PC-9 (cell line): ENCODE measurements at regions of chr17 and their contacts with region 1.

Region 1: GRCh38 chr17:77054936-77055335 is 85.8 kb upstream of the SEC14L1 start:
- DNase-seq: peak in 1 of 2 experiments; percentile 7
- H3K4me3 ChIP-seq: no peak overlapping the region
- H3K27ac ChIP-seq: no peak overlapping the region
- H3K4me1 ChIP-seq: no peaks in the 10 kb centered on the region
- H3K27me3 ChIP-seq: peaks cover 8% of the 10 kb centered on the region; the same call in 1 of the 2 replicates
- CTCF ChIP-seq: no peak

Region 2: GRCh38 chr17:76232342-76232741 is 822.6 kb before region 1 on chr17:
- CTCF ChIA-PET with region 1: no interaction called
- POLR2A ChIA-PET with region 1: interaction called, 25 read pairs
- intact Hi-C with region 1: no loop called
- DNase-seq: no peak
- H3K4me3 ChIP-seq: no peak overlapping the region
- H3K27ac ChIP-seq: no peak overlapping the region
- H3K4me1 ChIP-seq: no peaks in the 10 kb centered on the region
- H3K27me3 ChIP-seq: no peaks in the 10 kb centered on the region
- CTCF ChIP-seq: no peak

Region 3: GRCh38 chr17:76797241-76797840 is 257.6 kb before region 1 on chr17:
- CTCF ChIA-PET with region 1: no interaction called
- POLR2A ChIA-PET with region 1: no interaction called
- intact Hi-C with region 1: loop called (anchors 5 kb)
- DNase-seq: peak; percentile 40 to 57
- H3K4me3 ChIP-seq: no peak overlapping the region
- H3K27ac ChIP-seq: peak overlapping the region; percentile 16; the same call in 1 of the 2 replicates
- H3K4me1 ChIP-seq: peaks cover 13% of the 10 kb centered on the region
- H3K27me3 ChIP-seq: no peaks in the 10 kb centered on the region
- CTCF ChIP-seq: no peak

Region 4: DNA sequence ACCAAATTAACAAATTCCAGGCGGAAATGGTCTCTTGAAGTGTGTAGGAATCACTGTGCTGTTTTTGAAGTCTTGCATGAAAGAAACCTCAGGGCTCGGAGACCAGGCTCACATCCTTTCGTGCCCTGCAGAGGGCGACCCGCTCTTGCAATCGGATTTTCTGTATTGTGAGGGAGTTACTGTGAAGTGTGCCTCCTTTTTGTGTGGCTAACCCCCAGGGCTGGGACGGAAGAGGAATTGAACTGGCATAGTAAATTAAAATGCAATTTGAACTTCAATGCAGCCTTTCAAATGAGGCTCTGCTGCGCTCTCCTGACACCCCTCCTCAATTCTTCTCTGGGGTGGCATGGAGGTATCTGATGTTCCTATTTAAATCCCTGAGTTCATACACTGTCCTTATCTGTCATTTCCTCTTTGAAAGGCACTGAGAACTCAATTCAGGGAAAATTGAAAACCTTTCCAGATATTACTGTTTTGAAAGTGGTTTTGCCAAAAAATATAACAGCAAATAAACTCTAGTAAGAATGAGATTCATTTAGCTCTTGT is 238.3 kb before region 1 on chr17:
- CTCF ChIA-PET with region 1: no interaction called
- POLR2A ChIA-PET with region 1: interaction called, 3 read pairs
- intact Hi-C with region 1: loop called (anchors 1 kb)
- DNase-seq: peak; percentile 40 to 43
- H3K4me3 ChIP-seq: no peak overlapping the region
- H3K27ac ChIP-seq: no peak overlapping the region
- H3K4me1 ChIP-seq: no peaks in the 10 kb centered on the region
- H3K27me3 ChIP-seq: no peaks in the 10 kb centered on the region
- CTCF ChIP-seq: peak; percentile 60

Region 5: DNA sequence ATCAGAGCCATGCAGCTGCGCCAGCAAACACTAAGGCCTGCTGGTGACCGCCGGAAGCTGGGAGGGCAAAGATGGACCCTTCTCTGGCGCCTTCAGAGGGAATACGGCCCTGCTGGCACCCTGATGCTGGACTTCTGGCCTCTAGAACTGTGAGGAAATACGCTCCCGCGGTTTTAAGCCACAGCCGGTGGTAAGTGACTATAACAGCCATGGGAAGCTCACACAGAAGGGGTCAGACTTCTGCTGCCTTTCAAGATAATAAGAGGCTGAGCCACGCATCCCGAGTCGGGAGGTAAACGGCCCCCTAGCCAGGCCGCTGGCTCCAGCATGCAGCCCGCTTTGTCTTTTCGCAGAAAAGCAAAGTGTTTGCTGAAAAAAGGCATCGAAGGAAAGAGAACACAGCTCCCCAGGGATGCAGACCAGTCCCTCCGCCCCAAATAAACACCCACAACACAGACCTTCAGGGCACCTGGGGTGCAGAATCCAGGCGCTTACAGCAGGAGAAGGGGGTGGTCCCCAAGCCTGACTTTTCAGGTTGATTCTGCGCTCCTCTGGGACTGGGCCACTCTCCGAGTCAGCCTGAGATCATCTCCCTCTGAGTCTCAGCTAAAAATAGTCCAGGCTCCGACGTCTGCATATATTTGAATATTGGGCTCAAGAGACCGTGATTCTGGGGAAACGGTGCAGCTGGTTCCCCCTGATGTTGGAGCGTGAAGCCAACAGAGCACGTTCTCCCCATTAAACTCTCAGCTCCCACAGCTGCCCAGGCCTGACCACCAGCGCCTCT is 97.1 kb before region 1 on chr17:
- CTCF ChIA-PET with region 1: no interaction called
- POLR2A ChIA-PET with region 1: no interaction called
- intact Hi-C with region 1: no loop called
- DNase-seq: no peak
- H3K4me3 ChIP-seq: no peak overlapping the region
- H3K27ac ChIP-seq: no peak overlapping the region
- H3K4me1 ChIP-seq: no peaks in the 10 kb centered on the region
- H3K27me3 ChIP-seq: no peaks in the 10 kb centered on the region
- CTCF ChIP-seq: no peak

Region 6: GRCh38 chr17:77011173-77012011 is 43.5 kb before region 1 on chr17:
- CTCF ChIA-PET with region 1: interaction called, 3 read pairs
- POLR2A ChIA-PET with region 1: no interaction called
- intact Hi-C with region 1: loop called (anchors 5 kb)
- DNase-seq: peak in 1 of 2 experiments; percentile 39
- H3K4me3 ChIP-seq: no peak overlapping the region
- H3K27ac ChIP-seq: no peak overlapping the region
- H3K4me1 ChIP-seq: no peaks in the 10 kb centered on the region
- H3K27me3 ChIP-seq: no peaks in the 10 kb centered on the region
- CTCF ChIP-seq: peak; percentile 74

Region 7: GRCh38 chr17:77124192-77124889 is 69.4 kb after region 1 on chr17:
- CTCF ChIA-PET with region 1: interaction called, 16 read pairs
- POLR2A ChIA-PET with region 1: no interaction called
- intact Hi-C with region 1: no loop called
- DNase-seq: peak; percentile 69 to 87
- H3K4me3 ChIP-seq: peak overlapping the region; percentile 25; the same call in 1 of the 2 replicates
- H3K27ac ChIP-seq: peak overlapping the region; percentile 98
- H3K4me1 ChIP-seq: peaks cover 54% of the 10 kb centered on the region
- H3K27me3 ChIP-seq: no peaks in the 10 kb centered on the region
- CTCF ChIP-seq: no peak